H1 (cell line): ENCODE measurements at regions of chr1 and their contacts with region 1.

Region 1: GRCh38 chr1:24391882-24392603 is 21.5 kb downstream of the STPG1 start:
- DNase-seq: peak; percentile 70 to 88
- H3K4me3 ChIP-seq: no peak overlapping the region
- H3K27ac ChIP-seq: no peak overlapping the region
- H3K4me1 ChIP-seq: peaks cover 0 to 2% (median 0%) of the 10 kb centered on the region in 4 experiments; a peak in 4 of 7 replicates
- H3K27me3 ChIP-seq: no peaks in the 10 kb centered on the region
- CTCF ChIP-seq: peak; percentile 90 to 92 (median 92)
- EP300 ChIP-seq: no peak
- POLR2A ChIP-seq: no peak
- RAD21 ChIP-seq: peak; percentile 92 to 97

Region 2: GRCh38 chr1:24070821-24071393 is 321.1 kb before region 1 on chr1:
- CTCF ChIA-PET with region 1: interaction called, 17 read pairs
- POLR2A ChIA-PET with region 1: no interaction called
- DNase-seq: peak; percentile 53 to 91
- H3K4me3 ChIP-seq: peak overlapping the region in 2 of 4 experiments; percentile 29 to 42; a peak in 3 of 8 replicates
- H3K27ac ChIP-seq: no peak overlapping the region
- H3K4me1 ChIP-seq: peaks cover 0 to 3% (median under 1%) of the 10 kb centered on the region in 4 experiments; a peak in 4 of 7 replicates
- H3K27me3 ChIP-seq: no peaks in the 10 kb centered on the region; a peak in 1 of 7 replicates
- CTCF ChIP-seq: peak; percentile 90 to 94 (median 94)
- EP300 ChIP-seq: 0 out of 3 replicates have a peak, but pooled peaks of 1 of the 2 experiments have one; percentile 7
- POLR2A ChIP-seq: no peak
- RAD21 ChIP-seq: peak; percentile 86 to 93

Region 3: GRCh38 chr1:24222008-24222842 is 169.8 kb before region 1 on chr1:
- CTCF ChIA-PET with region 1: interaction called, 14 read pairs
- POLR2A ChIA-PET with region 1: no interaction called
- DNase-seq: no peak
- H3K4me3 ChIP-seq: no peak overlapping the region
- H3K27ac ChIP-seq: no peak overlapping the region
- H3K4me1 ChIP-seq: no peaks in the 10 kb centered on the region; a peak in 1 of 7 replicates
- H3K27me3 ChIP-seq: no peaks in the 10 kb centered on the region; a peak in 1 of 7 replicates
- CTCF ChIP-seq: no peak
- EP300 ChIP-seq: no peak
- POLR2A ChIP-seq: no peak
- RAD21 ChIP-seq: no peak

Region 4: GRCh38 chr1:24277420-24278169 is 114.4 kb before region 1 on chr1:
- CTCF ChIA-PET with region 1: interaction called, 12 read pairs
- POLR2A ChIA-PET with region 1: interaction called, 3 read pairs
- DNase-seq: no peak
- H3K4me3 ChIP-seq: no peak overlapping the region
- H3K27ac ChIP-seq: no peak overlapping the region
- H3K4me1 ChIP-seq: no peaks in the 10 kb centered on the region
- H3K27me3 ChIP-seq: no peaks in the 10 kb centered on the region
- CTCF ChIP-seq: no peak
- EP300 ChIP-seq: no peak
- POLR2A ChIP-seq: no peak
- RAD21 ChIP-seq: no peak

Region 5: GRCh38 chr1:24308365-24309015 is 83.6 kb before region 1 on chr1:
- CTCF ChIA-PET with region 1: interaction called, 34 read pairs
- POLR2A ChIA-PET with region 1: no interaction called
- DNase-seq: peak in 1 of 2 experiments; percentile 63
- H3K4me3 ChIP-seq: no peak overlapping the region
- H3K27ac ChIP-seq: peak overlapping the region; percentile 57; the same call in 1 of the 2 replicates
- H3K4me1 ChIP-seq: peaks cover 5 to 36% (median 28%) of the 10 kb centered on the region in 4 experiments; a peak in 6 of 7 replicates
- H3K27me3 ChIP-seq: no peaks in the 10 kb centered on the region
- CTCF ChIP-seq: peak; percentile 26 to 70 (median 69)
- EP300 ChIP-seq: no peak
- POLR2A ChIP-seq: no peak
- RAD21 ChIP-seq: peak; percentile 51 to 68

Region 6: DNA sequence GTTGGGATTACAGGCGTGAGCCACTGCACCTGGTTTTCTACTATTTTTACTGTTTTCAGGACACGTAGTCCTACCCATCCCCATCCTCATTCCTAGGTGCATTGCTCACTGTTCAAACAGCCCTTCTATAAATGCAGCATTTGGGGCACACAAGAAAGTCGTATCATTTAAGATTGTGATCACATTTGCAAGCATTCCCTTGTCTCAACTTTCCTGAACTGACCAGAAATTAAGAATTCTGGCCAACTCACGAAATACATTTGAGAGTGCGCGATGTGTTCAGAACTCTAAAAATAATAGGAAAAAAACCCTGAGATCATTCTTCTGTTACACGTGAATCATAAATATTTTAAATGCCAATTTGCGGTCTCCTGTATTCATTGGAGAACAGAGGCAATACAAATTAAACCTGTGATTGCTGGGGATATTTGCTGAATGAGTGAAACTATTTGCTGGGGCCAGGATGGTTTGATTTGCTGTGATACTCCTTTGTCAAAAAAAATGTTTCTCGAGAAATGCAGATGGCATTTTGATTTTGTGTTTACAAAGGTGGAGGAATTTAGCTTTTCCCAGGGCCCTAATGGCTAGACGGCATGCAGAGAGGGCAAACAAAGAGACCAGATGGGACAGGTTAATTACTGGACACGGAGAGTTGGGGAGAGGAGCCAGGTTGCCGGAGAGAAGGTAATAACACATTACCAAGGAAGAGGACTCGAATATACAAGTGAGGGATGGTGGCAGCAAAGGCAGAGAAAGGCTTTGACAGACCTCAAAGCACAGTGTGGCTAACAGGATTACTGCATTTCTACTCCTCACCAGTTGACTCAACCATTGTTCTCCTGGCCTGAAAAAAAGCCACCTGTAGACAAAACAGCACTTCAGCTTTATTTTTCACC is 16.9 kb before region 1 on chr1:
- CTCF ChIA-PET with region 1: interaction called, 51 read pairs
- POLR2A ChIA-PET with region 1: no interaction called
- DNase-seq: peak in 1 of 2 experiments; percentile 41
- H3K4me3 ChIP-seq: no peak overlapping the region
- H3K27ac ChIP-seq: no peak overlapping the region
- H3K4me1 ChIP-seq: peaks cover 0 to 13% (median 6%) of the 10 kb centered on the region in 4 experiments; a peak in 3 of 7 replicates
- H3K27me3 ChIP-seq: no peaks in the 10 kb centered on the region
- CTCF ChIP-seq: no peak
- EP300 ChIP-seq: 0 out of 3 replicates have a peak, but pooled peaks of 1 of the 2 experiments have one; percentile 68
- POLR2A ChIP-seq: no peak
- RAD21 ChIP-seq: no peak